ENCODE measurements at regions of chr11 and their contacts with region 1.

Region 1: GRCh38 chr11:64846998-64847666 is 2.7 kb upstream of the CDC42BPG start:
- DNase-seq: peak; percentile 93 to 96
- ATAC-seq: peak; percentile 82 to 91 (median 88)
- H3K4me3 ChIP-seq: no peak overlapping the region
- H3K27ac ChIP-seq: peak overlapping the region in 7 of 10 donors; percentile 42 to 96 (median 94)
- H3K4me1 ChIP-seq: peaks cover 32 to 66% (median 57%) of the 10 kb centered on the region in 9 donors
- H3K27me3 ChIP-seq: no peaks in the 10 kb centered on the region
- CTCF ChIP-seq: peak; percentile 97 to 100 (median 98)

Region 2: DNA sequence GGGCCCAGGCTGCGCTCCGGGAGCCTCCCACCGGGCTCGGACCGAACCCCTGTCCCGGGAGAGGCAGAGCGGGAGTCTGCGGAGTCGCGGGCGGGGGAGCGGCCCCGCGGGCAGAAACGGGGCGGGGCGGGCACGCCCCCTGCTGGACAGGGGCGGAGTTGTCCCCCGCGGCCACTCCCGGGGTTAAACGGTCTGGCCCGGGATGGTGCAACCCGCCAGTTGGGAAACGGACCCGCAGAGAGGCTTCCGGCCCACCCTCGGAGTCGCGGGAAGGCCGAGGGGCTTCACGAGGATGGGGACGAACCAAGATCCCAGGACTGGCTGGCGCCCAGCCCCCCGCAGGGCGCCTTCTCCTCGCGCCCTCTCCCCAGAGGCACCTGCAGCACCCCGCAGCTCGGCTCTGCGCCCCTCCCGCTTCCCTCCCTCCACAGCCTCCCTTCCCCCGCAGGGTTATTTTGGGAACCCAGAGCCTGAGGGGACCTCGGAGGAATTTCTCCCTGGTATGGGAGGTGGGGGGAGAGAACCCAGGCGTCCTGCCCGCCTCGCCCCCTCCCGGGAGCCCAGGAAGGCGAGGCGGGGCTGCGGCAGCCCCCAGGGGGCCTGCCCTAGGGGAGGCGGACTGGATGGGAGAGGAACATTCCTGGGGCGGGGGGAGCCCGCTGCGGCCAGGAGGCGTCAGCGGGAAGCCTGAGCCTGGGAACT is 104.1 kb before region 1 on chr11:
- intact Hi-C with region 1: no loop called
- DNase-seq: peak; percentile 77 to 88
- ATAC-seq: peak; percentile 35 to 64 (median 52)
- H3K4me3 ChIP-seq: peak overlapping the region; percentile 43 to 80 (median 68)
- H3K27ac ChIP-seq: peak overlapping the region; percentile 82 to 99 (median 96)
- H3K4me1 ChIP-seq: peaks cover 16 to 44% (median 41%) of the 10 kb centered on the region in 9 donors
- H3K27me3 ChIP-seq: no peaks in the 10 kb centered on the region
- CTCF ChIP-seq: peak; percentile 83 to 92 (median 88)

Region 3: DNA sequence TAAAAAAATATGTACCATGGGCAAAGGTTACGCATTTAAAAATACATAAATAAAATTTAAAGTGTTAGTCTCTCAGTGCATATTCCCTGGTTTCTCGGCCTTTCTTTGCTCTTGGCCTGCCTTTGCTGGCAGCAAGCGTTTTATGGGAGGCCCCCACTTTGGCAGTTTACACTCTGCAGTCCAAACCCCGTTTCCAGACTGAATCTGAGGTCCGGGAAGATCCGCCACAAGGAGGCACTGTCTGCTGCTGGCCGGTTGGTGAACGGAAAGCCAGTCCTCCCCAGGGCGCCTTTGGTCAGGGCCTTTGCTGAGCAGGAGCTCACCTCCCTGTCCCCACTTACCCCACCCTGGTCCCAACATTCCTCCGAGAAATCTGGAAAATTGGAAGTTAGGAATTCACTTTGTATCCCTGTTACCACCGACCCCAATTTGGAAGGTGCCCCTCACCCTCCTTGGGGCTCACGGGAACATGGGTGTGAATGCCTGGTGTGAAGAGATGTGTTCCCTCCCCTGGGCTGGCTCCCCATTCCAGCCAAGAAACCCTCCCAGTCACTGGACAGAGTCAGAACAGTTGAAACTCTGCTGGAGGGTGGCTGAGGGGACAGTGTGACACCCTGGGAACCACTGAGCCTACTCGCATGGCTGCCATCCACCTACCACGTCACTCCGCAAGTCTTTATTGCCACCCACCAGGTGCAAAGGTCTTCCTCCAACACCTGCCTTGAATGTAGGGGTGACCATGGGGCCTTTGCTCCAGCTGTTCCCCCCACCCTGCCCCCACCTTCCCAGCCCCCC is 59.4 kb before region 1 on chr11:
- intact Hi-C with region 1: loop called in 1 of 10 experiments (anchors 5 kb)
- DNase-seq: peak; percentile 34 to 62
- ATAC-seq: peak in 6 of 8 donors; percentile 54 to 67 (median 61)
- H3K4me3 ChIP-seq: no peak overlapping the region
- H3K27ac ChIP-seq: peak overlapping the region in 1 of 10 donors; percentile 11
- H3K4me1 ChIP-seq: peaks cover 0 to 7% (median 0%) of the 10 kb centered on the region in 9 donors
- H3K27me3 ChIP-seq: no peaks in the 10 kb centered on the region
- CTCF ChIP-seq: peak; percentile 41 to 83 (median 67)

Region 4: DNA sequence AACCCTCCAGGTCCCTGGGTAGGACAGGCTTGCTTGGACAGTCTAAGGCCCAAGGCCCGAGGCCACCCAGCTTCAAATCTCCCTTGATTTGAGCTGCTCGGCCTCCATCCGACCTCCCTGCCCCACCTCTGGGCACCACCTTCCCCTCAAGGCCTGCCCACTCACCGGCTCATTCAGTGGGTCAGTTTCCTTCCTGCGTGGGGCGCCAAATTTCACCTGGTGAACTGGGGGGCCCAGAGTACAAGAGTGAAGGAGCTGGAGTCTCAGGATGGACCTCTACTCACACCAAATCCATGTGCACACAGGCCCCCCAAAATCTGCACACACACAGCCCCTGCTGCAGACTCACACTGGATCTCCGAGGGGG is 47.9 kb before region 1 on chr11:
- intact Hi-C with region 1: no loop called
- DNase-seq: no peak
- ATAC-seq: no peak
- H3K4me3 ChIP-seq: no peak overlapping the region
- H3K27ac ChIP-seq: peak overlapping the region in 1 of 10 donors; percentile 9
- H3K4me1 ChIP-seq: peaks cover 13 to 42% (median 24%) of the 10 kb centered on the region in 9 donors
- H3K27me3 ChIP-seq: no peaks in the 10 kb centered on the region
- CTCF ChIP-seq: no peak

Region 5: DNA sequence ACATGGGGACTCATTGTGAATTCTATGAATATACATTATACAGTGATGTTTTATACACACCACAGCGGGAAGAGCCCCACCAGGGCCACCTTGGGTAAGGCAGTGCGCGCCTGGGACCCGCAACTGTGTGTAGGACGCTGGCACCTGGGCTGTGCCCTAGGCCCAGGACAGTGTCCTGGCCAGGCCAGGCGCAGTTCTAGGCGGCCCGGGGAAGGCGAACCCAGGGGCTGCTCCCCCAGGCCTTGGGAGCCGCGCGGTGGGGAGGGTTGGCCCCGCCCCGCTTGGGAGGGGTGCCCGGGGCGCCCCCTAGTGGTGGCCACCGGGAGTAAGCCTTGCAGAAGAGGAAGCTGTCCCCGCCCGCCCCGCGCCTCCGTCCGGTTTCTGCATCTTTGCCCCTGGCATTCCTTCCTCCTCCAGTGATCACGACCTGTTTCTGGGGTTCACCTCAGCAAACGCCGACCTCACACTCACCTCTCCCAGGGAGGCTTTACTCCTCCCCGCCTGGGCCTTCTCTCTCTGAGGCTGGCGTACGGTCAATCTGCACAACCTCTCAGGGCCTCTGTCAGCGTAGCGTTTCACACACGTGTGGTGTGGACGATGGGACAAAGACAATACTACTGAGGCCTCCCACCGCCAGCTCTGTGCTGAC is 40.7 kb after region 1 on chr11:
- intact Hi-C with region 1: loop called in 5 of 10 experiments (anchors 1 to 5 kb)
- DNase-seq: peak; percentile 80 to 90
- ATAC-seq: peak; percentile 83 to 96 (median 92)
- H3K4me3 ChIP-seq: peak overlapping the region in 7 of 10 donors; percentile 21 to 42 (median 34)
- H3K27ac ChIP-seq: peak overlapping the region; percentile 10 to 83 (median 62)
- H3K4me1 ChIP-seq: peaks cover 9 to 45% (median 26%) of the 10 kb centered on the region in 9 donors
- H3K27me3 ChIP-seq: no peaks in the 10 kb centered on the region
- CTCF ChIP-seq: peak; percentile 98 to 100 (median 99)

Region 6: GRCh38 chr11:64894070-64894796 is 47.1 kb after region 1 on chr11:
- intact Hi-C with region 1: loop called (anchors 1 to 5 kb)
- DNase-seq: peak; percentile 88 to 92
- ATAC-seq: peak; percentile 81 to 89 (median 86)
- H3K4me3 ChIP-seq: no peak overlapping the region
- H3K27ac ChIP-seq: peak overlapping the region in 7 of 10 donors; percentile 3 to 77 (median 68)
- H3K4me1 ChIP-seq: peaks cover 10 to 40% (median 26%) of the 10 kb centered on the region in 9 donors
- H3K27me3 ChIP-seq: no peaks in the 10 kb centered on the region
- CTCF ChIP-seq: peak; percentile 81 to 97 (median 91)

Region 7: DNA sequence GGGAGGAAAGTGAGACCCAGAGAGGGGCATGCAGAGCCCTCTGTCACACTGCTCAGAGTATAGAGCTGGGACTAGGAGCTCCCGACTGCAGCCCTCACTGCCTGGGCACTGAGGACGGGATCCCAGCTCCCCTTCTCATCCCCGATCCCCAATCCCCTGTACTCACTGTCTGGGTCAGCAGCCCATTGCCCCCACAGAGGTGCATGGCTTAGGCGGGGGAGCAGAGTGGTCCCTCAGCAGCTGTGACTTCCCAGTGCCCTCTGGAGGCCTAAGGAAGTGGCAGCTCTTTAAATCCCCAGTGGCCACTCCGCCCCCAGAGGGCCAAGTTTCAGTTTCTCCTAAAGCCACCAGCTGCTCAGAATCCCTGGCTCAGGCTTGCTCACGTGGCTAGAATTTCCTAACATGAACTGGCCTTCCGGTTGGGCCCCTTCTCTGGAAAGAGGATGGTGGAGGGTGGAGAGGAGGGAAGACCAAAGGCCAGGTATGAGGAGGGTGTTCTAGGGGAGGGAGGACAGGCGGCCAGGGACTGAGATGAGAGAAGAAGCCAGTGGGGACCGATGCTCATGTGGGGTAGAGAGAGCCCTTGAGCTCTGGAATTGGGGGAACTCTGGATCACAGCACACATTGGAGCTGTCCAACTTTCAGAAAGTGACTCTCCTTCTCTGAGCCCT is 149.7 kb after region 1 on chr11 and contains the start of gene BATF2:
- intact Hi-C with region 1: loop called in 1 of 10 experiments (anchors 10 kb)
- DNase-seq: peak; percentile 70 to 82
- ATAC-seq: peak; percentile 86 to 96 (median 92)
- H3K4me3 ChIP-seq: peak within 1 kb of the TSS; percentile 1 to 65 (median 52)
- H3K27ac ChIP-seq: peak within 1 kb of the TSS in 9 of 10 donors; percentile 41 to 88 (median 72)
- H3K4me1 ChIP-seq: peaks cover 0 to 51% (median 17%) of the 10 kb centered on the region in 9 donors
- H3K27me3 ChIP-seq: no peaks in the 10 kb centered on the region
- CTCF ChIP-seq: peak in 8 of 9 donors; percentile 22 to 62 (median 48)
- total RNA-seq, gene BATF2: 0.66 to 31.8 (median 1.7) TPM

Region 8: GRCh38 chr11:65013692-65014145 is 166.6 kb after region 1 on chr11:
- intact Hi-C with region 1: loop called in 4 of 10 experiments (anchors 5 to 10 kb)
- DNase-seq: peak; percentile 94
- ATAC-seq: peak; percentile 93 to 96 (median 96)
- H3K4me3 ChIP-seq: peak overlapping the region; percentile 57 to 92 (median 76)
- H3K27ac ChIP-seq: peak overlapping the region; percentile 87 to 100 (median 98)
- H3K4me1 ChIP-seq: peaks cover 11 to 34% (median 20%) of the 10 kb centered on the region in 9 donors
- H3K27me3 ChIP-seq: no peaks in the 10 kb centered on the region
- CTCF ChIP-seq: peak in 2 of 9 donors; percentile 61 to 63

Region 9: DNA sequence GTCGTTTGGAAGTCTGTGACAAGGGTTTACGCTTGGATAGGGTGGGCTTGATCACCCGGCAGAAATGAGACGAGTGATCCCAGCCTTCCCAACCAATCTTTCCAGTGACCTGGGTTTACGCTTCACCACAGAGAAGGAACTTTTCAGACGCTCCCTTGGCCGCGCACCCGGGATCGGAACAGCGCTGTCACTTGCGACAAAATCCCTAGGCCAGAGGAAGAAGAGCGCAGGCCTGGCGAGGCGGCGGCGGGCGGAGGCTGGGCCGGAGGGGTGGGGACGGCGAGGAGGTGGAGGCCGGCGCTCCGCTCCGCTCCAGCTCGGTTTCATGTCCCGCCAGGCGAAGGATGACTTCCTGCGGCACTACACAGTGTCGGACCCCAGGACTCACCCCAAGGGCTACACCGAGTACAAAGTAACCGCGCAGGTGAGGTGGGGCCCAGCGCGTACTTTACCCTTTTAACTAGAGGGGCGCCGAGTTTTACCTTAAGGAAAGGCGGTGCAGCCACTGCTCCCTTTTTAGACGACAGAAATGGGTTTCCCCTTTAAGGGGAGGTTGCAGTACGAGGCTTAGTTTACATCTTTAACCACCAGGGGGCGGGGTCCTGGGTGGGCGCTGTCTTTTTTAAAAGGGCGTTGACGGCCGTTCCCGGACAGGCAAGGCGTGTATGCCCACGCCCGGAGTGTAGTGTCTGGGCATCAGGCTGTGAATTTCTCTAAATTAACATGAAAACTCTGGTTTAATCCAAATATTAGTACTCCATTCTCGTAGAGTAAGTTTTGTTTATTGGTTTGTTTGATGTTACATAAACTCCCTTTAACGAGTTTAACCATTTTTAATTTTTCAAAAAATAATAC is 180.3 kb after region 1 on chr11 and contains the start of gene SNX15:
- intact Hi-C with region 1: loop called in 1 of 10 experiments (anchors 10 kb)
- DNase-seq: peak; percentile 93 to 96
- ATAC-seq: peak; percentile 98 to 99 (median 99)
- H3K4me3 ChIP-seq: peak within 1 kb of the TSS; percentile 2 to 68 (median 64)
- H3K27ac ChIP-seq: peak within 1 kb of the TSS; percentile 82 to 92 (median 88)
- H3K4me1 ChIP-seq: peaks cover 0 to 22% (median 17%) of the 10 kb centered on the region in 9 donors
- H3K27me3 ChIP-seq: no peaks in the 10 kb centered on the region
- CTCF ChIP-seq: peak; percentile 75 to 92 (median 88)
- total RNA-seq, gene SNX15: 11.4 to 21.8 (median 15.2) TPM

Region 10: GRCh38 chr11:65204646-65205601 is 357.8 kb after region 1 on chr11:
- intact Hi-C with region 1: no loop called
- DNase-seq: no peak
- ATAC-seq: peak in 7 of 8 donors; percentile 18 to 68 (median 43)
- H3K4me3 ChIP-seq: no peak overlapping the region
- H3K27ac ChIP-seq: no peak overlapping the region
- H3K4me1 ChIP-seq: peaks cover 0 to 3% (median 0%) of the 10 kb centered on the region in 9 donors
- H3K27me3 ChIP-seq: no peaks in the 10 kb centered on the region
- CTCF ChIP-seq: peak; percentile 62 to 96 (median 78)

Region 11: DNA sequence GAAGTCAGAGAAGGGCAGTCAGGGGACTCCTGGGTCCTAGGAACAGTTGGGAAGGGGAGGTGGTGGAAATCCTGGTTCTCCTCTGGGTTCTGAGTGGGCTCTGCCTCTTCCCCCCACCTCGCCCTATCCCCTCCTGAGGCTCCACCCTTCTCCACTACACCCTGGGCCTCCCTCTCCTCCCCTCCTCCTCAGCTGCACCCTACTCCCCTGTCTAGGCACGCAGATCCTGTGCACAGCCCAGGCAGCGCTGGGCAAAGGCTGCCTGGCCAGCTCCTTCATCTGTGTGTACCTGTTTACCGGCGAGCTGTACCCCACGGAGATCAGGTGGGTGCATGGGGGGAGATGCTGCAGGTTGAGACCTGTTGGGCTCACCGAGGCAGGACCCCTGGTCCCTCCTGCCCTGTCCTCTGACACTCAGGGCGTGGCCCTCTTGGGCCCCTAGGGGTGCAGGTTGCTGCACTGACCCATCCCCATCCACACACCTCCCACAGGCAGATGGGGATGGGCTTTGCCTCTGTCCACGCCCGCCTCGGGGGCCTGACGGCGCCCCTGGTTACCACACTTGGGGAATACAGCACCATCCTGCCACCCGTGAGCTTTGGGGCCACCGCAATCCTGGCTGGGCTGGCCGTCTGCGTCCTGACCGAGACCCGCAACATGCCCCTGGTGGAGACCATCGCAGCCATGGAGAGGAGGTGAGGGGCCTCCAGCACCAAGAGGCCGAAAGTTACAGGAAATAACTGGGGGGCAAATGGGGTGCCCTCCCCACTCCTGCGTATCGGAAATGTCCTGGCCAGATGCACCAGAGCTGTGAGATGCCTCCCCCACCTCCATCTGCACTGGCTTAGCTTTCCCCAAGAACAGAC is 389.3 kb after region 1 on chr11:
- intact Hi-C with region 1: no loop called
- DNase-seq: no peak
- ATAC-seq: peak in 2 of 8 donors; percentile 39 to 55
- H3K4me3 ChIP-seq: no peak overlapping the region
- H3K27ac ChIP-seq: no peak overlapping the region
- H3K4me1 ChIP-seq: no peaks in the 10 kb centered on the region
- H3K27me3 ChIP-seq: peaks cover 0 to 1% (median 0%) of the 10 kb centered on the region in 7 donors
- CTCF ChIP-seq: no peak

Measured in heart right ventricle (tissue), 16 donors.